ENCODE measurements at regions of chr14 and their contacts with region 1.

Region 1: DNA sequence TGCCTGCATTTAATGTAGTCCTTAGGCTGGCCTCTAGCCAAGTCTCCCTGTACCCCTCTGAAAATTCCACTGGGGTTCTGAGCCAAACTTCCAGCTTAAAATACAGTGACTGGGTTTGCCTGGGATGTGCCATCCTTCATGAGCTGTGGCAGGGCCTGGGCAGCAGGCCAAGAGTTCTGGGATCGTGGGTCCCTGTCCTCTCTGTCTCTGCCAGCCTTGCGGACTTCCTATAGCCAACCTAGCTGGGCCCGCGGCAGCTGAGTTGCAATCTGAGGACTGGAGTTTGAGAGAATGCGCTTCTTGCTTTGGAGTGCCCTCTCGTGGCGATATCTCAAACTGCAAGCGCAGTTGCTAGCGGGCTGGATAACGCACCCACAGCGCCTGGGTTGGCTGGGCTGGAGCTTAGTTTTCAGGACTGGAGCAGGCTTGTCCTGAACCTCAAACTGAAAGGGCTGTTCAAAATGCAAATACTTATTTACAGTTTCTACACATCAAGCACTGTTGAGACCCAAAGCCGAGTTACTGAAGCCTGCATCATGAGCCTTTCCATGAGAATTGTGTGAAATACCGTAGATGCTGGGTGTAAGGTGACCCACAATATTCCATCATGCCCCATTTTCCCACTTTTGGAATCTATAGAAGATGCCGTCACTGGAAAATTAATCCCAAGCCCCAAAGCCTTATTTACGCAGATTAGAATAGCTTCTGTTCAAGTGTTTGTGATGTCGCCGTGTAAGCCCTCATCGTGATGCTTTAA is 7.3 kb upstream of the IFI27L2 start:
- DNase-seq: peak; percentile 73
- CTCF ChIP-seq: peak; percentile 94

Region 2: DNA sequence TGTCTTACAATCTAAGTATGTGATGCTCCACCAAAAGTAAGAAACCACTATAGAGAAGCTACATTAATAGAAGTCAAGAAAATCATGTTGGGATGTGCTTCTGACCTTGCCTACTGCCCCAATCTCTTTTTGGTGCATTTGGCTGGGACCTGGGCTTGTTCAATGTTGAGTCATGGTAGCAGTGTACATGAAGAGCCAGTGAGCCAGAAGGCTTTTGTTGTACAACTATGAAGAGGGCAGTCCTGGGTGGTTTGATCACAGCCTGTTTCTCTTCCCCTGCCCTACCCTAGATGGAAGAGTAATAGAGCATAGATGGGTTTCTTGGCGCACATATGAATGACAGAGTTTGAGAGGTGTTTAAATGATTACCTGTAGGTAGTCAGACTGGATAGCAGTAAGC is 873.3 kb before region 1 on chr14:
- in situ Hi-C with region 1: no loop called
- DNase-seq: no peak
- CTCF ChIP-seq: no peak

Region 3: GRCh38 chr14:93752635-93753561 is 383.9 kb before region 1 on chr14:
- in situ Hi-C with region 1: no loop called
- DNase-seq: no peak
- CTCF ChIP-seq: no peak

Region 4: GRCh38 chr14:94036313-94037050 is 100.3 kb before region 1 on chr14:
- in situ Hi-C with region 1: loop called (anchors 10 kb)
- DNase-seq: peak; percentile 83
- CTCF ChIP-seq: peak; percentile 84

Measured in GM13976 (cell line).